PC-9 (cell line): ENCODE measurements at regions of chrX and their contacts with region 1.

Region 1: GRCh38 chrX:119410027-119410823 is 11.1 kb downstream of the SLC25A43 start:
- DNase-seq: peak; percentile 92 to 94
- H3K4me3 ChIP-seq: no peak overlapping the region
- H3K27ac ChIP-seq: peak overlapping the region; percentile 73
- H3K4me1 ChIP-seq: peaks cover 31% of the 10 kb centered on the region
- H3K27me3 ChIP-seq: no peaks in the 10 kb centered on the region
- CTCF ChIP-seq: no peak

Region 2: GRCh38 chrX:119235872-119236622 is 174.2 kb before region 1 on chrX and contains the start of gene PGRMC1:
- CTCF ChIA-PET with region 1: no interaction called
- POLR2A ChIA-PET with region 1: no interaction called
- intact Hi-C with region 1: loop called (anchors 5 kb)
- DNase-seq: peak; percentile 73 to 87
- H3K4me3 ChIP-seq: peak within 1 kb of the TSS; percentile 94
- H3K27ac ChIP-seq: peak within 1 kb of the TSS; percentile 33
- H3K4me1 ChIP-seq: peaks cover 35% of the 10 kb centered on the region
- H3K27me3 ChIP-seq: no peaks in the 10 kb centered on the region
- CTCF ChIP-seq: no peak
- total RNA-seq, gene PGRMC1: 133 and 204 TPM in 2 replicates

Region 3: GRCh38 chrX:119292445-119292844 is 117.8 kb before region 1 on chrX:
- CTCF ChIA-PET with region 1: no interaction called
- POLR2A ChIA-PET with region 1: interaction called, 4 read pairs
- intact Hi-C with region 1: loop called (anchors 5 kb)
- DNase-seq: no peak
- H3K4me3 ChIP-seq: no peak overlapping the region
- H3K27ac ChIP-seq: no peak overlapping the region
- H3K4me1 ChIP-seq: no peaks in the 10 kb centered on the region
- H3K27me3 ChIP-seq: no peaks in the 10 kb centered on the region
- CTCF ChIP-seq: peak; percentile 56

Region 4: DNA sequence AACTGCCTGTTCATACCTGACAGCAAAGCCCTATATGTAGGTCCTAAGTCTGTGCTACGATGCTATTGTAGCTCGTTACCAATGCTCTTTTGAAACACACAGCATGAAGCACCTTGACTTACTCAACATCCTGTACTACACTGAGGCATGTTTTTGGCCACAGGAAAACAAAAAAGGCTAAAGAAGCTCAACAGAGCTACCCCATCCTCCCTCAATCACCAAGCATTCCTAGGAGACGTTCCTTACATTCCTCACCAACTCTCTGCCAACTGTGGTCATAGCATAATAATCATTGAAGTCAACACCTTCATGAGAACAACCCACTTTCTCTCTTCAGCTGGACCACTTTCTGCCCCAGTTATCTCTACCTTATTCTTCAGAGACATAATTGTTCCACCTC is 84.8 kb before region 1 on chrX:
- CTCF ChIA-PET with region 1: no interaction called
- POLR2A ChIA-PET with region 1: no interaction called
- intact Hi-C with region 1: loop called (anchors 1 kb)
- DNase-seq: peak; percentile 35 to 58
- H3K4me3 ChIP-seq: no peak overlapping the region
- H3K27ac ChIP-seq: peak overlapping the region; percentile 51
- H3K4me1 ChIP-seq: peaks cover 18% of the 10 kb centered on the region
- H3K27me3 ChIP-seq: no peaks in the 10 kb centered on the region
- CTCF ChIP-seq: no peak

Region 5: DNA sequence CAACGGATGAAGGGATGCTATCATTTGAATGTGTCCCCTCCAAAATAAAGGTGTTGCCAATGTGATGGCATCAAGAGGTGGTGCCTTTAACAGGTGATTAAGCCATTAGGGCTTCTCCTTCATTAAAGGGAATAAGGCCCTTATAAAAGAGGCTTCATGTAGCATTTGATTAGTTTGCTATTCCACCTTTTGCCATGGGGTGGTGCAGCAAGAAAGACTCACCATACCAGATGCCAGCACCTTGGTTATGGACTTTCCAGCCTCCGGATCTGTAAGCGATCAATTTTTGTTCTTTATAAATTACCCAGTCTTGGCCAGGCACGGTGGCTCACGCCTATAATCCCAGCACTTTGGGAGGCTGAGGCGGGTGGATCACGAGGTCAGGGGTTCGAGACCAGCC is 18.9 kb before region 1 on chrX:
- CTCF ChIA-PET with region 1: no interaction called
- POLR2A ChIA-PET with region 1: interaction called, 11 read pairs
- intact Hi-C with region 1: no loop called
- DNase-seq: no peak
- H3K4me3 ChIP-seq: no peak overlapping the region
- H3K27ac ChIP-seq: no peak overlapping the region
- H3K4me1 ChIP-seq: no peaks in the 10 kb centered on the region
- H3K27me3 ChIP-seq: no peaks in the 10 kb centered on the region
- CTCF ChIP-seq: peak; percentile 71

Region 6: GRCh38 chrX:119398974-119399771 is 11.1 kb before region 1 on chrX and contains the start of gene SLC25A43:
- CTCF ChIA-PET with region 1: no interaction called
- POLR2A ChIA-PET with region 1: no interaction called
- intact Hi-C with region 1: loop called (anchors 1 kb)
- DNase-seq: peak in 1 of 2 experiments; percentile 50
- H3K4me3 ChIP-seq: peak within 1 kb of the TSS; percentile 94
- H3K27ac ChIP-seq: 0 out of 2 replicates have a peak within 1 kb of the TSS, but pooled peaks have one; percentile 38
- H3K4me1 ChIP-seq: peaks cover 39% of the 10 kb centered on the region
- H3K27me3 ChIP-seq: no peaks in the 10 kb centered on the region
- CTCF ChIP-seq: no peak
- total RNA-seq, gene SLC25A43: 38.4 and 42.3 TPM in 2 replicates

Region 7: GRCh38 chrX:119549327-119550016 is 139.2 kb after region 1 on chrX:
- CTCF ChIA-PET with region 1: no interaction called
- POLR2A ChIA-PET with region 1: no interaction called
- intact Hi-C with region 1: no loop called
- DNase-seq: no peak
- H3K4me3 ChIP-seq: no peak overlapping the region
- H3K27ac ChIP-seq: no peak overlapping the region
- H3K4me1 ChIP-seq: peaks cover 22% of the 10 kb centered on the region
- H3K27me3 ChIP-seq: no peaks in the 10 kb centered on the region
- CTCF ChIP-seq: no peak

Region 8: GRCh38 chrX:119745283-119745848 is 335.1 kb after region 1 on chrX:
- CTCF ChIA-PET with region 1: no interaction called
- POLR2A ChIA-PET with region 1: no interaction called
- intact Hi-C with region 1: no loop called
- DNase-seq: no peak
- H3K4me3 ChIP-seq: no peak overlapping the region
- H3K27ac ChIP-seq: no peak overlapping the region
- H3K4me1 ChIP-seq: no peaks in the 10 kb centered on the region
- H3K27me3 ChIP-seq: no peaks in the 10 kb centered on the region
- CTCF ChIP-seq: no peak

Region 9: DNA sequence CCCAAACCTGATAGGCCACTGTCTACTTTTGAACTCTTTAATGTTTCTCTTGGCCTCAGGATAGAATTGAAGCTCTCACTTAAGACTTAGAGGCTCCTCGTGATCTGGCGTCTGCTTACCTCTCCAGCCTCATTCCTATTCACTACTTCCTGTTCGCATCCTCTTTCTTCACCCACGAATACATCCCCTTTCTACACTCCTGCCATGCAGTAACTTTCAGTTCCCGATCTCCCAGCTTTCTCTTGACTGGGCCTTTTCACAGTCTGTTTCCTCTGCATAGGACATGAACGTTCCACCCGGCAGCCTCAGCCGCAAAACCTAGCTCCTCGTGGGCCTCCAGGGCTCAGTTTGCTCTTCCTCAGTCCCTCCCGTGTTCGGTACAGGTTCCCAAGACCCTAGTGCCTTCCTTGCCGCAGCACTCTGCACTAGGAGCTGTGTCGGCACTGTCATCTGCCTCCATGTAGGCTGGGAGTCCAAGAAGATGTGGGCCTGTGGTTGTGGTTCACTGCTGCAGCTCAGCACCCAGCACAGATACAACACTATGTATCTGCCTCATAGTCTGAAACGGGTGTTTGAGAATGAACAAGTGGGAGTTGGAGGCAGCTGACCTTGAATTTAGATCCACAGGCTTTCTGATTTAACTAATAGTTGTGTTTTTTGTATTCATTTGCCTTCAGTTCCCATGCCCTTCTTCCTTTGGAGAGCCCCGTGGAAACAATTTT is 365.5 kb after region 1 on chrX:
- CTCF ChIA-PET with region 1: no interaction called
- POLR2A ChIA-PET with region 1: no interaction called
- intact Hi-C with region 1: no loop called
- DNase-seq: no peak
- H3K4me3 ChIP-seq: no peak overlapping the region
- H3K27ac ChIP-seq: no peak overlapping the region
- H3K4me1 ChIP-seq: no peaks in the 10 kb centered on the region
- H3K27me3 ChIP-seq: no peaks in the 10 kb centered on the region
- CTCF ChIP-seq: no peak

Region 10: DNA sequence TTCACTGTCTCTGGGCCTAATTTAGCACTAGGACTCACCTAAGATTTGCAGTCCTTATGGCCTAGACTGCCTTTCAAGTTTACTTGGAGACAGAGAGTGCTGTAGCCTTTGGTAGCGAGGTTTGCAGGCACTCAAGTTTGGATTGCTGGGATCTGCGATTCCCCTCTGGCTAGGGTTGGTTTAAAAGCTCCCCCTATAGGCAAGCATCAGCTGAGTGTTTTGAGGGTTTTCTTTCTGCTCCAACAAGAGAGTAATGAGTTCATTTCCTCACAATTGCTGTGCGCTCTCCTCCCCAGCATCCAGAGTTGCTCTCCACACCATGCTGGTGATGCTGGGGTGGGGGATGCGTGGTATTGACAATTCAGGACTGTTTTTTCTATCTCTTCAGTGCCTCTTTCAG is 1844.1 kb after region 1 on chrX:
- CTCF ChIA-PET with region 1: no interaction called
- POLR2A ChIA-PET with region 1: no interaction called
- intact Hi-C with region 1: no loop called
- DNase-seq: no peak
- H3K4me3 ChIP-seq: no peak overlapping the region
- H3K27ac ChIP-seq: no peak overlapping the region
- H3K4me1 ChIP-seq: no peaks in the 10 kb centered on the region
- H3K27me3 ChIP-seq: no peaks in the 10 kb centered on the region
- CTCF ChIP-seq: no peak; the same call in 1 of the 2 replicates